ENCODE measurements at regions of chr4 and their contacts with region 1.

Region 1: DNA sequence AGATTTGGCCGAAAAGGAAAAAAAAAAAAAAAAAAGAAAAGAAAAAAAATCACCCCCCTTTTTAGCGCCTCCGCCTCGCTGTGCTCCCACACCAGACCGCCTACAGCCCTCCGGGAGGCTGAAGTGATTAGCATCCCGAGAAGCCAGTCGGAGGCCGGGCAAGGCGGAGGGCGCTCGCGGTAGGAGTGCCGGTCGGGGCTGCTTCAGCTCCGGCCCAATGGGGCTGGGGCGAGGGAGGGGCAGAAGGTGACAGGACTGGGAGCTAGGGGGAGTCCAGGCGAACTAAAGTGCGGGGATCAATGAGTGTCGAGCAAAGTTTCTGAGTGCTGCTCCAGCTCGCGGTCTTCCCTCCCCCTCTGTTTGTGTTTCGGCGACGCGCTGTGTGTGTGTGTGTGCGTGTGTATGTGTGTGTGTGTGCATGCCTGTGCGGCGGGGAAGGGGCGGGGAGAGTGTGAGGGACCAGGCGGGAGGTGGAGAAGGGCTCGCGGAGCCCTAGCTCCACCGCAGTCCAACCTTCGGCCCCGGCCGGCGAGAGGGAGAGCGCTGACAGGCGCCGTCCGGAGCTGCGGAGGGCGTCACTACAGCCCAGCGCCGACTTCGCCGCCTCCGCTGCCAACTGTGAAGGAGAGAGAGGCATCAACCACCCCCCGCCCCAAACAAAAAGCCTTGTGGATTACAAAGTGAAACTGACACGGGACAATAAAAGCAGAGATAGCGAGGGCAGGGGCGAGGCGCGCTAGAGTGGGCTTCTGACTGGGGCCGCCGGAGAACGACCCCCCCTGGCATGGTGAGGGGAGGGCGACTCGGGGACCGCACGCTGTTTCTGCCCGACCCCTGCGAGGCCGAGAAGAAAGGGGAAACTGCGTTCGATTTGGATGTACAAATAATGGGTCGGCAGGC is at the start of gene FAT4:
- DNase-seq: peak; percentile 90
- ATAC-seq: peak; percentile 85
- H3K4me3 Mint-ChIP-seq: peak within 1 kb of the TSS; percentile 88
- H3K27ac Mint-ChIP-seq: peak within 1 kb of the TSS; percentile 35
- H3K4me1 Mint-ChIP-seq: peaks cover 37% of the 10 kb centered on the region
- H3K27me3 Mint-ChIP-seq: peaks cover 34% of the 10 kb centered on the region
- CTCF ChIP-seq: no peak
- total RNA-seq, gene FAT4: 6.6 to 10.5 TPM (median 6.8 TPM) in 3 replicates

Region 2: DNA sequence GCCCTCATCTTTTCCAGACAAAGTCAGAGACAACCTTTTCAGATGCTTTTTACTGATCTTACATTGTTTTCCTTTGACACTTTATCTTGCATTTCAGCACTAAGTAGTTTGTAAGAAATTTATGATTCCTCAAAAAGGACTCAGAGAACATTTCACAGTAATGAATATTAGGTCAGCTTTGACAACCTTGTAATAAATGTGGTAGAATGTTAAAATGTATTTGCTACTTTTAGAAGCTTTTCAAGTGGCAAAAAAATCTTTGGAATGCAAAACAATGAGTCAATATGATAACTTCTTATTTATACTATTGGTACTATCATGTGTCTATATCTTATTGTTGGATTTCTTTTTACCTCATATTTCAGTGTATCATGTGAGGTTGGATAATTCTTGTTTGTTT is 146.4 kb before region 1 on chr4:
- CTCF ChIA-PET with region 1: no interaction called
- POLR2A ChIA-PET with region 1: no interaction called
- DNase-seq: no peak
- ATAC-seq: no peak
- H3K4me3 Mint-ChIP-seq: no peak overlapping the region
- H3K27ac Mint-ChIP-seq: no peak overlapping the region
- H3K4me1 Mint-ChIP-seq: no peaks in the 10 kb centered on the region
- H3K27me3 Mint-ChIP-seq: no peaks in the 10 kb centered on the region
- CTCF ChIP-seq: no peak

Region 3: GRCh38 chr4:125750828-125751466 is 436.0 kb after region 1 on chr4:
- CTCF ChIA-PET with region 1: interaction called, 64 read pairs
- POLR2A ChIA-PET with region 1: no interaction called
- DNase-seq: no peak
- ATAC-seq: peak; percentile 100
- H3K4me3 Mint-ChIP-seq: no peak overlapping the region
- H3K27ac Mint-ChIP-seq: no peak overlapping the region
- H3K4me1 Mint-ChIP-seq: peaks cover 10% of the 10 kb centered on the region
- H3K27me3 Mint-ChIP-seq: no peaks in the 10 kb centered on the region
- CTCF ChIP-seq: peak; percentile 32; the same call in 1 of the 2 replicates